Pancreas (tissue), 10 donors: ENCODE measurements at regions of chr6 and their contacts with region 1.

Region 1: DNA sequence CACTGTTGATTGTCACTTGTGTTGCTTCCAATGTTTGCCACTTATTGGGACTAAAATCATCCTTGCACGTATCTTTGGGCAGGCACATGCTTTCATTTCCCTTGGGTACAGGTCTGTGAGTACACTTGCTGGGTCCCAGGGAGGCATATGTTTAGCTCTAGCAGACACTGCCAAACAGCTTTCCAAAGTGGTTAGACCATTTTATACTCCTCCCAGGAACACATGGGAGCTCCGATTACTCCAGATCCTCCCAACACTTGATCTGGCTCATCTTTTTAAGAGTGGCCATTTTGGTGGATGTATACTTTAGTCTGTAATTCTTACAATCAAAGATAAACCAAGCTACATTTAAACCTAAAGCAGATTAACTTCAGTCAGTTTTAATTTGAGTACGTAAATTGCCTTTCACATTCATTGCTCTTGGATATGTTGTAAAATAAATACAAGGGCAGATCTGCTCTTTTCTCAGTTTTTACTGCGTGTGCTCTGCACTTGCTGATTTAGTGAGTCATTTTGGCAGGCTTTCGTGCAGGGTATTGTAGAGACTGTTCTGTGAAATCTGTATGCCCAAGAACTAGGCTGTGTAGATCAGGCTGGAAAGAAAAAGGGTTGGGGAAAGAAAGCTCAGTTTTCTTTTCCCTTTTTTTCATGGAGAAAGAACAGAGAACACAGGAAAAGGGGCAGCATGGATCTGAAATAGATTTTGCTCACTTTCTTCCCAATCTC is 19.5 kb downstream of the SLC22A1 start:
- DNase-seq: no peak
- ATAC-seq: no peak
- H3K4me3 ChIP-seq: no peak overlapping the region
- H3K27ac ChIP-seq: no peak overlapping the region
- H3K4me1 ChIP-seq: peaks cover 0 to 11% (median 3%) of the 10 kb centered on the region in 3 donors
- H3K27me3 ChIP-seq: no peaks in the 10 kb centered on the region
- CTCF ChIP-seq: no peak

Region 2: DNA sequence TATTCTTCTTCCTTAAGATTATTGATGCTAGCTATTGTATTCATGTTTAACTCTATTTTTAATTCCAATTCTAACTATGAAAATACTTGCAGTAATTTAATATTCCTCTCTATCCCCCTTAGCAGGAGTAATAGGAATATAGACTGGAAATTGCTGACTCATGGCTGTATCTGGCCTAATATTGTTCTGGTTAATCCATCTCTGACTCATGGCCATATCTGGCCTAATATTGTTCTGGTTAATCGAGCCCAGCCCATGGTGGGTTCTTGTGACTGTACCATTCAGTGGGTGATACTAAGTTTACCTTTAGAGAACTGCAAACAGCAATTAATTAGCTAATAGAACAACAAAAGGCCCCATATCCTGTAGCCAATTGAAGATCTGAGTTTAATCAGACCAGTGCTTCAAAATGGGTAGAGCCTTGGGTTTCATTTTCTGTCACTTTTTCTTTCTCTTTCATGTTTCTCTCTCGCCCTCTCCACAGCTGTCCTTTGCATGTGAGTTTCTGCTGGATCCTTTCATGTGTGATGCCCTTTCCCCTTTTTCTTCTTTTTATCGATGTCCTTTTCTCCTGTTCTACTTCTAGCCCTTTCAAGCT is 257.6 kb after region 1 on chr6:
- intact Hi-C with region 1: no loop called
- DNase-seq: no peak
- ATAC-seq: no peak
- H3K4me3 ChIP-seq: no peak overlapping the region
- H3K27ac ChIP-seq: no peak overlapping the region
- H3K4me1 ChIP-seq: peaks cover 15 to 27% (median 21%) of the 10 kb centered on the region in 3 donors
- H3K27me3 ChIP-seq: no peaks in the 10 kb centered on the region
- CTCF ChIP-seq: no peak

Region 3: DNA sequence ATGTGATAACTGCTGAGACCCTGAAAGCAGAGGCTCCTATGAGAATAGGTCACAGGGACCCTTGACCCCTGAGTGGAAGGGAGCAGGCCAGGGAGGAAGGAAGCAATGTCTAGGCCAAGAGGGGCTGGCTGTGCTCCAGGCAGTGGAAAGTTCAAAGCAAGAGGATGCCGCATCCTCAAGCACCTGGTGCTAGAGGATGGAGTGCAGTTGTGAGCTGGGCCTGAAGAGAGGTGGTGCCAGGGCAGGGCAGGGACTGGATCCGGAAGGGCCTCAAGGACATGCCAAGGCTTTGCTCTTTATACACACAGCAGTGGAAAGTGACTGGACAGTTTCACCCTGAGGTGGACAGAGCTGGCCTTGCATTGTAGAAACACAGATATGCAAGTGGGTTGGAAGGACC is 304.0 kb after region 1 on chr6:
- intact Hi-C with region 1: loop called in 1 of 3 experiments (anchors 5 kb)
- DNase-seq: no peak
- ATAC-seq: no peak
- H3K4me3 ChIP-seq: no peak overlapping the region
- H3K27ac ChIP-seq: no peak overlapping the region
- H3K4me1 ChIP-seq: no peaks in the 10 kb centered on the region
- H3K27me3 ChIP-seq: no peaks in the 10 kb centered on the region
- CTCF ChIP-seq: no peak